Heart right ventricle (tissue), 16 donors: ENCODE measurements at regions of chr6 and their contacts with region 1.

Region 1: DNA sequence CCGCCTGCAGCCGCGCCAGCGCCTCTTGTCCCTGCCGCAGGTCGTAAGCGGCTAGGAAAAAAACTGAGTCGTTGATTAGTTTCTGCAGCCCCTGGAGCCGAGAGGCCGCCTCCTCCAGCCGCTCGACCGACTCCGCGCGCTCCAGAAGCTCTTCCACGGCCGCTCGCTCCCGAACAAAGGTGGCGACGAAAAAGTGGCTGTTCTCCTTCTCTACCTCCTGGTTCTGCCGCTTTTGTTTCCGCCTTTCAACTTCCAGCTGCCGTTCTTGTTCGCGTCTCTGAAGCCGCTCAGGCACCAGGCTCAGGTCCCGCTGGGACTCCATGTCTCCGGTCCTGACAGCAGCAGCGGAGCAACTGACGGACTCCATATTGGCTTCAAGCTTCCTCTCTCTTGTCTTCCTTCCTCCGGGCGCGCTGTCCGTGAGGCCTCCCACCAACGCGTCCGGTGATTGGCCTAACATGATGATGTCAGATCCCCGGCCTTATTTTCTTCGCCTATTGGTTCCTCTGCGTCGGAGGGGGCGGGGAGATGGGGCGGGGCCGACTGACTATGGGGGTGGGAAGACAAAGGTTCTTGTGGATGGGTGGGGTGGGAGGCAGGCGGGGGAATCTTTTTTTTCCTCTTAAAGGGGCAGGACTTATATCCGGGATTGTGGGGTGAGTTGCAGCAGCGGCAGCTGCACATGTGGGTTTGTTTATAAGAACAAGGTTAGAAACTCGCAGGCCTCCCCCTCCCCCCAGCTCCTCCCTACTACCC is at the start of gene TBCC:
- DNase-seq: peak; percentile 93 to 97
- ATAC-seq: peak; percentile 92 to 97 (median 94)
- H3K4me3 ChIP-seq: peak within 1 kb of the TSS; percentile 68 to 99 (median 96)
- H3K27ac ChIP-seq: peak within 1 kb of the TSS; percentile 84 to 98 (median 95)
- H3K4me1 ChIP-seq: peaks cover 5 to 38% (median 32%) of the 10 kb centered on the region in 9 donors
- H3K27me3 ChIP-seq: no peaks in the 10 kb centered on the region
- CTCF ChIP-seq: no peak
- total RNA-seq, gene TBCC: 9.8 to 16.1 (median 13.3) TPM

Region 2: GRCh38 chr6:42782622-42783176 is 36.8 kb after region 1 on chr6:
- intact Hi-C with region 1: loop called in 9 of 10 experiments (anchors 1 to 5 kb)
- DNase-seq: peak; percentile 81 to 85
- ATAC-seq: peak; percentile 70 to 85 (median 81)
- H3K4me3 ChIP-seq: peak overlapping the region; percentile 61 to 100 (median 90)
- H3K27ac ChIP-seq: peak overlapping the region; percentile 99 to 100 (median 100)
- H3K4me1 ChIP-seq: peaks cover 3 to 42% (median 39%) of the 10 kb centered on the region in 9 donors
- H3K27me3 ChIP-seq: no peaks in the 10 kb centered on the region
- CTCF ChIP-seq: no peak

Region 3: DNA sequence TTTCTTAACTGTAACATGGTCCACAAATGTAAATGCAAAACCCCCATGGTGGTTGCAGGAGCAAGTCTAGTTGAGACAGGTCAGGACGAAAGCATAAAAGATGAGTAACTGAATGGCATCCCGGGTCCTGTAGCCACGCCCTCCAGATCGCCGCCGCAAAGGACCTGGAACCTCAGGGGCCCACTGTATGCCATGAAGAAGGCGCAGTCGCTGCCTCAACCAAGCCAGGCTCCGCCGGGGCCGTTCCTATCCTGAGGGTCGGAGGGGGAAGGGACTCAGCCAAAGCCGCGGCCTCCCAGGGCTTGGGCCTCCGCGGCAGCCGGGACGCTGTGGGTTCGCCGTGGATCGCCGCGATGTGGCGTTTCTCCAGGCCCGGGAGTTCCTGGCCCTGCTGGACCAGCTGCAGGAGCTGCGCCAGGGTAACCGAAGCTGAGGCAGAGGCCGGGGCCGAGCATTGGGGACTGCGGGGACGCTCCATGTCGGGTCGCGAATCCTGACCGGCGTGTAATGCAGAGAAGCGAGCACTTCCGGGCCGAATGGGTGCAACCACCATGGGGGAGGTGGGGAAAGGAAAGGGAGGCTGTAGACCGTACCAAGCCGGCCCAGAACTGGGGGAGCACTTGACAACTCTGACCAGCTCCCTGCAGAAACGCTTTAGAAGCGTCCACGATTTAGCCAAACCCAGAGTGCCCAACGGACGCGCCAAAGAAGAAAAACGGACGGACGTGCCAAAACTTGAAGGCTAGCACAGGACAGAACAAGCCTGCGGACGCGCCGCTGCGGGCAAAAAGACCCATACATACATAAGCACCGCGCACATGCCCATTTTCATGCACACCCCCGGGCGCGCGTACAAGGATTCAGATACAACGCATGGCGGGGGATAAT is 144.7 kb after region 1 on chr6:
- intact Hi-C with region 1: loop called in 1 of 10 experiments (anchors 5 kb)
- DNase-seq: peak; percentile 92 to 96
- ATAC-seq: peak; percentile 98 to 99 (median 99)
- H3K4me3 ChIP-seq: peak overlapping the region; percentile 78 to 94 (median 91)
- H3K27ac ChIP-seq: peak overlapping the region; percentile 87 to 96 (median 92)
- H3K4me1 ChIP-seq: peaks cover 7 to 29% (median 15%) of the 10 kb centered on the region in 9 donors
- H3K27me3 ChIP-seq: no peaks in the 10 kb centered on the region
- CTCF ChIP-seq: no peak

Region 4: GRCh38 chr6:42970871-42971612 is 225.2 kb after region 1 on chr6:
- intact Hi-C with region 1: no loop called
- DNase-seq: no peak
- ATAC-seq: peak in 5 of 8 donors; percentile 20 to 45 (median 37)
- H3K4me3 ChIP-seq: no peak overlapping the region
- H3K27ac ChIP-seq: no peak overlapping the region
- H3K4me1 ChIP-seq: peaks cover 0 to 12% (median 6%) of the 10 kb centered on the region in 9 donors
- H3K27me3 ChIP-seq: no peaks in the 10 kb centered on the region
- CTCF ChIP-seq: no peak

Region 5: GRCh38 chr6:43174263-43175112 is 428.6 kb after region 1 on chr6:
- intact Hi-C with region 1: loop called in 1 of 10 experiments (anchors 5 kb)
- DNase-seq: peak; percentile 89 to 98
- ATAC-seq: peak; percentile 67 to 89 (median 83)
- H3K4me3 ChIP-seq: peak overlapping the region in 9 of 10 donors; percentile 37 to 99 (median 97)
- H3K27ac ChIP-seq: peak overlapping the region; percentile 85 to 99 (median 98)
- H3K4me1 ChIP-seq: peaks cover 19 to 51% (median 34%) of the 10 kb centered on the region in 9 donors
- H3K27me3 ChIP-seq: no peaks in the 10 kb centered on the region
- CTCF ChIP-seq: peak in 6 of 9 donors; percentile 16 to 49 (median 30)